Activated CD4-positive, alpha-beta memory T cell treated with anti-CD3 and anti-CD28 coated beads for 36 hours (primary cell): ENCODE measurements at regions of chr4 and their contacts with region 1.

Region 1: DNA sequence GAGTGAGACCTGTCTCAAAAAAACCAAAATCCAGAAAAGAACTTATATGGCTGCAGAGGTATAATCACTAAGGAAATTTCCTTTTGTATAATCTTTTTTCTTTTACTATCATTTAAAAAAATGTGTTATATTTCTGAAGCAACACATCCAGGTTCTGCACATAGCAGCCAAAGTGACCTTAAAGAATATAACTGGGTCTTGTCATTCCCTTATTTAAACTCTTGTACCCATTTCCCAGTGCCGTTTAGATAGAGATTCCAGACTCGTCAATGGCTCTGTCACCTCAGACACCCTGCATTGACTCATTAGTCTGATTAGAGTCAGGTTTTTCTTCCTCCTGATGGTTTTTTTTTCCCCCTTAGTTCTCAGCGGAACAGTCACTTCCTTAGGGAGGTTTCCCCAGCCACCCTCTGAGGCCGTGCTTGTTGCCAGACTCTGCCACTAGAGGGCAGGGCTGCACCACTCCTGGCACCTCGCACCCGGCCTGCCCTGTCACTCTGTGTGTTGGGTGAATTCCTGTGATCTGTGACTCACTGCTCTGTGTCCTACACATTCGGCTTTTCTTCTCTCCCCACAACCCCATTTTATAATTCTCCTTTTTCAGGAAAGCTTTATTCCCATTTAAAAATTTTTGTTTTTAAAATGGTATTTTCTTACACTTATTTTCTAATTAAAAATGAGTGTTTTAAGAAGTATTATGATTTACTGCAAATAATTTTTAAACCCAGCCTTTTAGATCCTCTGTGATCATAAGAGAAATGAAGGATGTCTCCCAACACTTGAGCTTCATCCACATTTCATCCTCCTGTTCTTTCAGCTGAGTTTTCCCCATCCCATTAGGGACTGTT is 32.1 kb downstream of the HTT start:
- DNase-seq: peak; percentile 96
- H3K4me3 Mint-ChIP-seq: no peak overlapping the region
- H3K27ac Mint-ChIP-seq: peak overlapping the region; percentile 42
- H3K4me1 Mint-ChIP-seq: peaks cover 12% of the 10 kb centered on the region
- H3K27me3 Mint-ChIP-seq: no peaks in the 10 kb centered on the region

Region 2: DNA sequence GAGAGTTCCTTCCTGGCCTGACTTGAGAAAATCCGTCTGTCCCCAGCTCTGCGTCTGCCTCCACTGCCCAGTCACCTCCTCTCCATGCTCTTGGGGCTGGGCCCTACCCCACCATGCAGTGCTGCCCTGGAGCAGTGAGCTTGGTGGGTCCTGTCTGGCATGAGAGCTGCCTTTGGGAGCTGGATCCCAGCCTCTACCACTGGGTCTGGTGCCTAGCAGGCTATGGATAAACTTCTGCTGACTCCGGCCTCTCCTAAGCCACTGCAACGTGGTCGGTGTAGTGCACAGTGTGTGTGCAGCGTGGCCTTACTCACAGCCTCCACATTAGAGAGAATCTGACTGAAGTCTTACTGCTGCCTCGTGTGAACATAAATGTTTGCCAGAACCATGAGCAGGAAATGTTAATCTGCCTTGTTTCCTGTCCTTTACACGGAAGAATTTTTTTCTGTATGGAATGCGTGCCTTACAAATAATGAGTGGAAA is 15.6 kb after region 1 on chr4:
- CTCF ChIA-PET with region 1: interaction called, 12 read pairs
- POLR2A ChIA-PET with region 1: no interaction called
- intact Hi-C with region 1: no loop called
- DNase-seq: no peak
- H3K4me3 Mint-ChIP-seq: no peak overlapping the region
- H3K27ac Mint-ChIP-seq: peak overlapping the region; percentile 60
- H3K4me1 Mint-ChIP-seq: peaks cover 16% of the 10 kb centered on the region
- H3K27me3 Mint-ChIP-seq: no peaks in the 10 kb centered on the region

Region 3: DNA sequence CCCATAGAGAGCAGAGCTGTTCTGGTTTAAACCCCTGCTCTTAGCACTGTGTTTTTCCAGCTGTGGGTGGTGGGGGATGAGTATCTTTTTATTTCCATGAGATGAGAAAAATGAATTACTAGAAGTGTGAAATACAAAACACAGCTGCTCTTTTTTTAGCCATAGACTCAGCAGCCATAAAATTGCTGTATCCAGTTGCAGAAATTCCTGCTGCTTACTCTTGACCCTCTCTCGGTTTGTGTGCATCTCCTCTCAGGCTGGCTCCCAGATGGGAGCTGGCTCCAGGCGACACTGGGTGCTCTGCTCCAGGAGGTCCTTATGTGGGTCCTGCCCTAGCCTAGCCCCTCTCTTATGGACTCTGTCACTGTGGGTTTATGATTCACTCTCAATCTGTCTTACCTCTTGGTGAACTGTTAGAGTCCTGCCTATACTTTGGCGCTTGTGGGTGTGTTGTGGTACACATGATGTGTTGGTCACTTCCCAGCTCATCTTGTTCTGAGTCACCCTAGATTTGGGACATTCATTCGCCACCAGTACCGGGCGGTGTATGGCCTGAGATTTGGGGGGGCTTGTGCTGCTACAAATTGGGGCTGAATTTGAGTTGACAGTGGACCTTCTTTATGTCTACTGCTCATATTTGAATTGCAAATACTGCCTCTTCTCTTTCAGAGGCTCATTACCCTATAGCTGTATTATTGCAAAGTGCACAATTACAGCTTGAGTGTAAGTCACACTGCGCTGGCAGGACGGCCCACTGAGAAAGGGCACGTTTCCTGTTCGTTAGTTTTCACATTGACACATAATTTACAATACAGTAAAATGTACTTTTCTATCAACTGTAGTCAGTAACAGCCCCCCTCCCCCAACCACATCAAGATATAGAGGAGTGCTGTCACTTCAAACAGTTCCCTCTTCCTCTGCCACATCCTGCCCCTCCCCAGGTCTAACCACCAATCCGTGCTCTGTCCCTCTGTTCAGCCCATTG is 95.4 kb after region 1 on chr4:
- CTCF ChIA-PET with region 1: interaction called, 4 read pairs
- POLR2A ChIA-PET with region 1: no interaction called
- intact Hi-C with region 1: loop called (anchors 1 kb)
- DNase-seq: peak; percentile 81
- H3K4me3 Mint-ChIP-seq: no peak overlapping the region
- H3K27ac Mint-ChIP-seq: peak overlapping the region; percentile 82
- H3K4me1 Mint-ChIP-seq: peaks cover 39% of the 10 kb centered on the region
- H3K27me3 Mint-ChIP-seq: no peaks in the 10 kb centered on the region

Region 4: DNA sequence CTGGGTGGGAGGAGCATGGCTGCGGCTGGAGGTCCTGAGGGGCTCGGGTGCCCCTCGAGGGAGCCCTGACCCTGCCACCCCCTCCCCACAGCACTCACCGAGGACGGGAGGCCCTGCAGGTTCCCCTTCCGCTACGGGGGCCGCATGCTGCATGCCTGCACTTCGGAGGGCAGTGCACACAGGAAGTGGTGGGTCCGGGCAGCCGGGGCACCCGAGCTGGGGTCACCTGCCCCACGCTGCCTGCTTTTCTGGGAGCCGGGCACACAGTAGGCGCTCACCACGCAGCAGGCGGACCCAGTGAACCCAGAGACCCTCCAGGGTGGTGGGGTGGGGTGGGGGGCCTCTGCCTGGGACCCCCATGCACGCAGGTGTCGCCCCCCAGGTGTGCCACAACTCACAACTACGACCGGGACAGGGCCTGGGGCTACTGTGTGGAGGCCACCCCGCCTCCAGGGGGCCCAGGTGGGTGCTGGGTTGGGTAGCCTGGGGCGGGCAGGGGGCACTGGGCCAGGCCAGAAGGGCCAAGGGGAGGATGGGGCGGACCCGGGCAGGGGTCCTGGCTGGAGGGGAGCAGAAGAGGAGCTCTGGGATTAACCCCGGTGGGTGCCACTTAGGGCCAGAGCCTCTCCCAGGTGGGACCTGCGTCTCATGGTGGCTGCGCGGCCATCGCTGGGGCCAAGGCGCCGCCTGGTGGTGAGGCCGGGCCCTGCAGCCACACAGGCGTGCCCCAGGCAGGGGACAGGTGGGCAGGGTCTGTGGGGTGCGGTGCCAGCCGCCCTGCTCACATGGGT is 336.6 kb after region 1 on chr4:
- CTCF ChIA-PET with region 1: interaction called, 9 read pairs
- POLR2A ChIA-PET with region 1: no interaction called
- intact Hi-C with region 1: loop called (anchors 1 kb)
- DNase-seq: peak; percentile 75
- H3K4me3 Mint-ChIP-seq: no peak overlapping the region
- H3K27ac Mint-ChIP-seq: no peak overlapping the region
- H3K4me1 Mint-ChIP-seq: no peaks in the 10 kb centered on the region
- H3K27me3 Mint-ChIP-seq: no peaks in the 10 kb centered on the region